ENCODE measurements at regions of chr20 and their contacts with region 1.

Region 1: GRCh38 chr20:18793625-18794427 is 19.8 kb upstream of the SCP2D1 start:
- DNase-seq: peak; percentile 87 to 94
- ATAC-seq: peak; percentile 99 to 100 (median 100)
- H3K4me3 ChIP-seq: peak overlapping the region; percentile 80
- H3K27ac ChIP-seq: peak overlapping the region; percentile 94
- H3K4me1 ChIP-seq: peaks cover 9% of the 10 kb centered on the region
- H3K27me3 ChIP-seq: peaks cover 0 to 2% (median 0%) of the 10 kb centered on the region in 3 donors
- CTCF ChIP-seq: no peak

Region 2: GRCh38 chr20:18587665-18588573 is 205.9 kb before region 1 on chr20 and contains the start of gene DTD1:
- intact Hi-C with region 1: loop called in 1 of 2 experiments (anchors 5 kb)
- DNase-seq: peak; percentile 96 to 98
- ATAC-seq: peak; percentile 96 to 98 (median 98)
- H3K4me3 ChIP-seq: peak within 1 kb of the TSS; percentile 94
- H3K27ac ChIP-seq: peak within 1 kb of the TSS; percentile 83
- H3K4me1 ChIP-seq: peaks cover 8% of the 10 kb centered on the region
- H3K27me3 ChIP-seq: no peaks in the 10 kb centered on the region
- CTCF ChIP-seq: peak; percentile 65
- total RNA-seq, gene DTD1: 16.9 to 19.5 (median 18.5) TPM

Region 3: GRCh38 chr20:18632196-18633009 is 161.4 kb before region 1 on chr20:
- intact Hi-C with region 1: loop called (anchors 5 kb)
- DNase-seq: peak; percentile 59 to 76
- ATAC-seq: peak; percentile 90 to 98 (median 92)
- H3K4me3 ChIP-seq: no peak overlapping the region
- H3K27ac ChIP-seq: no peak overlapping the region
- H3K4me1 ChIP-seq: peaks cover 3% of the 10 kb centered on the region
- H3K27me3 ChIP-seq: no peaks in the 10 kb centered on the region
- CTCF ChIP-seq: peak; percentile 92

Region 4: GRCh38 chr20:18639501-18639979 is 154.3 kb before region 1 on chr20:
- intact Hi-C with region 1: loop called in 1 of 2 experiments (anchors 5 kb)
- DNase-seq: no peak
- ATAC-seq: peak; percentile 93 to 99 (median 99)
- H3K4me3 ChIP-seq: peak overlapping the region; percentile 20
- H3K27ac ChIP-seq: peak overlapping the region; percentile 67
- H3K4me1 ChIP-seq: peaks cover 14% of the 10 kb centered on the region
- H3K27me3 ChIP-seq: no peaks in the 10 kb centered on the region
- CTCF ChIP-seq: no peak

Region 5: GRCh38 chr20:18857640-18858039 is 63.8 kb after region 1 on chr20:
- intact Hi-C with region 1: no loop called
- DNase-seq: no peak
- ATAC-seq: no peak
- H3K4me3 ChIP-seq: no peak overlapping the region
- H3K27ac ChIP-seq: no peak overlapping the region
- H3K4me1 ChIP-seq: no peaks in the 10 kb centered on the region
- H3K27me3 ChIP-seq: no peaks in the 10 kb centered on the region
- CTCF ChIP-seq: no peak